CD8-positive, alpha-beta T cell (primary cell): ENCODE measurements at regions of chr17 and their contacts with region 1.

Region 1: GRCh38 chr17:4215882-4216570 is 47.8 kb downstream of the ANKFY1 start:
- DNase-seq: no peak
- ATAC-seq: no peak
- H3K4me3 ChIP-seq: no peak overlapping the region
- H3K4me3 Mint-ChIP-seq: no peak overlapping the region
- H3K27ac ChIP-seq: no peak overlapping the region
- H3K27ac Mint-ChIP-seq: no peak overlapping the region
- H3K4me1 ChIP-seq: no peaks in the 10 kb centered on the region
- H3K4me1 Mint-ChIP-seq: peaks cover 7% of the 10 kb centered on the region
- H3K27me3 ChIP-seq: no peaks in the 10 kb centered on the region
- H3K27me3 Mint-ChIP-seq: no peaks in the 10 kb centered on the region
- CTCF ChIP-seq: no peak

Region 2: DNA sequence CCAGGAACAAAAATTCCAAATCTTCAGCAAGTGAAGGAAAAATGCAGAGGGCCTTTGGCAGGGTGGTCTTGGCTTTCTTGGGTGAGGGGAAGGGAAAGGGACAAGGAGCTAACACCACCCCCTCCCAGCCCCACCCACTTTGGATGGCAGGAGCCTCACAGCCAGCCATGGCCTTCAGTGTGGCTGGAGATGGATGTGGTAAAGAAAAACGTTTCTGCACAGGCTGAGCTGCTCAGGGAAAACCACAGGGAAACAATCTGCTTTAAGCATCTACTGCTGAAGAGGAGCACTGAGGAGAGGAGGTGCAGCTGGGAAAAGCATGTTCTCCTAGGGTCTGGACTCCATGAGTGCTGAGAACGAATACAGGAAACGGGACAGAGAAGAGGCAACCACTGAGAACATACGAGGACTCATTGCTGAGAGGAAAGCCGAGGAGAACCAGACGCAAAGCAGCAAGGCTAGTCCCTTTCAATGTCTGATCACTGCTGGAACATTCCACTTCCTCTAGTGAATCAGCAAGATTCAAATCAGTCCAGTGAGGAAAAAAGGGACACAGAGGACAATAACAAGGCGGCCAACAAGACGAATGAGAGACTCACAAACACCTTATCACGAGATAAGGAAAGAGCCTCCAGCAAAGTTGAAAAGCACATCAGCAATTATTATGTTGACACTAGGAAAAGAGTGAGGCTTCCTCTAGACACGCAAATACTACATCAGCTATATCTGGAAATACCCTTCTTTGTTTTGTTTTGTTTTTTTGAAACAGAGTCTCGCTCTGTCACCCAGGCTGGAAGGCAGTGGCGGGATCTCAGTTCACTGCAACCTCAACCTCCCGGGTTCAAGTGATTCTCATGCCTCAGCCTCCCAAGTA is 114.9 kb before region 1 on chr17:
- CTCF ChIA-PET with region 1: no interaction called
- POLR2A ChIA-PET with region 1: no interaction called
- intact Hi-C with region 1: no loop called
- DNase-seq: no peak
- ATAC-seq: peak; percentile 23
- H3K4me3 ChIP-seq: no peak overlapping the region
- H3K4me3 Mint-ChIP-seq: no peak overlapping the region
- H3K27ac ChIP-seq: no peak overlapping the region
- H3K27ac Mint-ChIP-seq: peak overlapping the region; percentile 64
- H3K4me1 ChIP-seq: no peaks in the 10 kb centered on the region
- H3K4me1 Mint-ChIP-seq: peaks cover 5% of the 10 kb centered on the region
- H3K27me3 ChIP-seq: no peaks in the 10 kb centered on the region
- H3K27me3 Mint-ChIP-seq: no peaks in the 10 kb centered on the region
- CTCF ChIP-seq: no peak

Region 3: DNA sequence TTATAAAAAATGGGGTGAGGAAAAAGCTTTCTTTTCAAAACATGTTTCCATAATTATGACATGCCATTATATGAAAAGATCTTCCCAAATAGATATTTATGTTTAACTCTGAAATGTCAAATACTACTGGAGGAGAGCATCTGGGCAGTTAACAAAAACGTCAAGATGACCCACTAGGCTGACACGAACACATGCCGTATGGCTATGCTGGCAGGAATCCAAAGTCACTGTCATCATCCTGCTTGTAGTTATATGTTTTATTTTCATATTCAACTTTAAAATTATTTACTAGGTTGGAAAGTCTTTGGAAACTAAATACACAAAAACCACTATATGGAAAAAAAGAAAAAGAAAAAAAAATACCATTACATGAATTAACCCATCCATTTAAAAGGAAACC is 20.4 kb after region 1 on chr17:
- CTCF ChIA-PET with region 1: interaction called, 13 read pairs
- POLR2A ChIA-PET with region 1: no interaction called
- intact Hi-C with region 1: no loop called
- DNase-seq: no peak
- ATAC-seq: no peak
- H3K4me3 ChIP-seq: no peak overlapping the region
- H3K4me3 Mint-ChIP-seq: no peak overlapping the region
- H3K27ac ChIP-seq: no peak overlapping the region
- H3K27ac Mint-ChIP-seq: no peak overlapping the region
- H3K4me1 ChIP-seq: peaks cover 17% of the 10 kb centered on the region
- H3K4me1 Mint-ChIP-seq: peaks cover 22% of the 10 kb centered on the region
- H3K27me3 ChIP-seq: no peaks in the 10 kb centered on the region
- H3K27me3 Mint-ChIP-seq: no peaks in the 10 kb centered on the region
- CTCF ChIP-seq: no peak

Region 4: DNA sequence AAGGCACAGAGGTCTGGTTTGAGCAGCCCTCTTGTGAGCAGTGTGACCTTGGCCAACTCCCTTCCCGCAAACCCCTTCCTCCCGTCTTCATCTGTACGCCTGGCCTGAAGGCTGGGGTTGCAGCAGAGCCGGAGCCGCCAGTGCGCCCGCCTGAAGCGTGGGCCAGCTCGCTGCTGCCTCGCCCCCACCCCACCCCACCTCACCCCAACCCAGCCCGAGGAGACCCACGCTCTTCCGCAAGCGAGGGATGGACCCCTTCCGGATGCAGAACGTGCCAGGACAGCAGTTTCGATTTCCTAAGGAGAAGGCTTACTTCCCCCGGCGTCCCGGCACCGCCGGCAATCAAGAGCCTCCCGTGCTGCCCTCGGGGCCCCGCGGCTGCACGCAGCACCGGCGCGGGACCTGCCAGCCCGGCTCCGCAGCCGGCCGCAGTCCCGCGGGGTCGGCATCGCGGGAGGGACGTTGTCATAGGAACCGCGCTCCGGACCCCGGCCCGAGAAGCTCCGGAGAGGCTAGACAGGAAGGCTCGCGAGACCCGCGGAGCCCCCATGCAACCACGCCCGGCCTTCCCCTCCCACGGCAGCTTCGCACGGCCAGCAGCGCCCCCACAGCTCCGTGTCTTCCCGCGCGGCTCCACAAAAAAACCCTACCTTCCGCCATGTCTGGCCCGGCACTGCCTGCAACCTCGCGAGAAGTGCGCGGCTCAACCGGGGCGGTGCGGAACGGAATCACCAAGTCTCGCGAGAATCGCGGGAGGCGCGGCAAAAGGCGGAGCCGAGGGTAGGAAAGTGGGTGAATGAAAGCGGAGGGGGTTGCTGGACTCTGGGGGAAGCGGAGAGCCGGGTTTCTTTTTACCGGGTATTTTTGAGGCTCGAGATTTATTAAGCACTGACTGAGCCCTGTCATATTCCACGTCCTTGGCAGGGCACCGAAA is 47.5 kb after region 1 on chr17 and contains the start of gene ANKFY1:
- CTCF ChIA-PET with region 1: interaction called, 5 read pairs
- POLR2A ChIA-PET with region 1: no interaction called
- intact Hi-C with region 1: loop called (anchors 1 to 5 kb)
- DNase-seq: peak; percentile 95 to 98 (median 97)
- ATAC-seq: peak; percentile 95
- H3K4me3 ChIP-seq: peak within 1 kb of the TSS; percentile 86 to 99
- H3K4me3 Mint-ChIP-seq: peak within 1 kb of the TSS; percentile 90
- H3K27ac ChIP-seq: peak within 1 kb of the TSS; percentile 81 to 88
- H3K27ac Mint-ChIP-seq: peak within 1 kb of the TSS; percentile 91
- H3K4me1 ChIP-seq: peaks cover 21% of the 10 kb centered on the region
- H3K4me1 Mint-ChIP-seq: peaks cover 40% of the 10 kb centered on the region
- H3K27me3 ChIP-seq: no peaks in the 10 kb centered on the region
- H3K27me3 Mint-ChIP-seq: no peaks in the 10 kb centered on the region
- CTCF ChIP-seq: no peak
- total RNA-seq, gene ANKFY1: 26.2 to 28.6 TPM

Region 5: DNA sequence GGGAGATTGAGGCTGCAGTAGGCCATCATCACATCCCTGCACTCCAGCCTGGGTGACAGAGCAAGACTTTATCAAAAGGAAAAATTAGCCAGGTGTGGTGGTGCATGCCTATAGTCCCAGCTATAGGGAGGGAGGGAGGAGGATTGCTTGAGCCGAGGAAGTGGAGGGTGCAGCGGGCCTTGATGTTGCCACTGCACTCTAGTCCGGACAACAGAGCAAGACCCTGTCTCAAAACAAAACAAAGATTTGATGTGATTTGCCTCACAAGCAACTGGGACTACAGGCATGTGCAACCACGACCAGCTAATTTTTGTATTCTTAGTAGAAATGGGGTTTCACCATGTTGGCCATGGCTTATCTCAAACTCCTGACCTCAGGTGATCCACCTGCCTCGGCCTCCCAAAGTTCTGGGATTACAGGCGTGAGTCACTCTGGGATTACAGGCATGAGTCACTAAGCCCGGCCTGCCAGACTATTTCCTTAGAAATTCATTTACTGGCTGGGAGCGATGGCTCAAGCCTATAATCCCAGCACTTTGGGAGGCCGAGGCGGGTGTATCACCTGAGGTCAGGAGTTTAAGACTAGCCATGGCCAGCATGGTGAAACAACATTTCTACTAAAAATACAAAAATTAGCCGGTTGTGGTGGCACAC is 139.0 kb after region 1 on chr17:
- CTCF ChIA-PET with region 1: no interaction called
- POLR2A ChIA-PET with region 1: no interaction called
- intact Hi-C with region 1: loop called in 1 of 2 experiments (anchors 5 kb)
- DNase-seq: no peak
- ATAC-seq: no peak
- H3K4me3 ChIP-seq: no peak overlapping the region
- H3K4me3 Mint-ChIP-seq: no peak overlapping the region
- H3K27ac ChIP-seq: no peak overlapping the region
- H3K27ac Mint-ChIP-seq: no peak overlapping the region
- H3K4me1 ChIP-seq: peaks cover 49% of the 10 kb centered on the region
- H3K4me1 Mint-ChIP-seq: peaks cover 58% of the 10 kb centered on the region
- H3K27me3 ChIP-seq: no peaks in the 10 kb centered on the region
- H3K27me3 Mint-ChIP-seq: no peaks in the 10 kb centered on the region
- CTCF ChIP-seq: no peak

Region 6: GRCh38 chr17:4412933-4413831 is 197.2 kb after region 1 on chr17:
- CTCF ChIA-PET with region 1: interaction called, 78 read pairs
- POLR2A ChIA-PET with region 1: interaction called, 3 read pairs
- intact Hi-C with region 1: loop called in 1 of 2 experiments (anchors 1 kb)
- DNase-seq: peak; percentile 83 to 96 (median 89)
- ATAC-seq: peak; percentile 96
- H3K4me3 ChIP-seq: peak overlapping the region in 1 of 2 experiments; percentile 4
- H3K4me3 Mint-ChIP-seq: no peak overlapping the region
- H3K27ac ChIP-seq: no peak overlapping the region
- H3K27ac Mint-ChIP-seq: no peak overlapping the region
- H3K4me1 ChIP-seq: peaks cover 4% of the 10 kb centered on the region
- H3K4me1 Mint-ChIP-seq: peaks cover 6% of the 10 kb centered on the region
- H3K27me3 ChIP-seq: no peaks in the 10 kb centered on the region
- H3K27me3 Mint-ChIP-seq: no peaks in the 10 kb centered on the region
- CTCF ChIP-seq: peak; percentile 63

Region 7: DNA sequence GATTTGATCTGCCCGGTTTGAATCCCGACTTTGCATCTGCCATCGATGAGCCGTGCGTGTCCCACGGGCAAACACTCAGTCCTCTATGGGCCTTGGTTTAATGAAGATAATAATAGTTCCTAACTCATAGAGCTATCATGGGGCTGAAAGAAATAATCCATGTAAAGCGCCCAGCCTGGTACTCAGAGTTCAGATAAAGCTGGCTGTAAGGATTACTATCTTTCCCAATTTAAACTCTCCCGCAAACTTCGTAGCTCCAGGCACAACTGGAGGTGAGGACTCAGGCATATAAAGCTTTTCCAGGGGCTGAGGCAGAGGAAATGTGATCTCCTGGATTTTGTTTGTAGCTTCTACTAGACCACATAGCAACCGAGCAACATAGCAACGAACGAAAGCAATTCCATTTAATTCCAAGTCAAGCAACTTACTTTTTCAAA is 409.2 kb after region 1 on chr17:
- CTCF ChIA-PET with region 1: interaction called, 3 read pairs
- POLR2A ChIA-PET with region 1: no interaction called
- intact Hi-C with region 1: loop called in 1 of 2 experiments (anchors 10 kb)
- DNase-seq: no peak
- ATAC-seq: no peak
- H3K4me3 ChIP-seq: no peak overlapping the region
- H3K4me3 Mint-ChIP-seq: no peak overlapping the region
- H3K27ac ChIP-seq: no peak overlapping the region
- H3K27ac Mint-ChIP-seq: no peak overlapping the region
- H3K4me1 ChIP-seq: no peaks in the 10 kb centered on the region
- H3K4me1 Mint-ChIP-seq: no peaks in the 10 kb centered on the region
- H3K27me3 ChIP-seq: no peaks in the 10 kb centered on the region
- H3K27me3 Mint-ChIP-seq: peaks cover 6% of the 10 kb centered on the region
- CTCF ChIP-seq: no peak